ENCODE measurements at regions of chr12 and their contacts with region 1.

Region 1: GRCh38 chr12:61781021-61781581 is 479.1 kb upstream of the USP15 start:
- DNase-seq: no peak

Region 2: GRCh38 chr12:60059180-60059579 is 1721.9 kb before region 1 on chr12:
- intact Hi-C with region 1: loop called in 1 of 2 experiments (anchors 5 kb)
- DNase-seq: no peak

Measured in posterior vena cava (tissue), 2 donors.